Activated naive CD4-positive, alpha-beta T cell treated with anti-CD3 and anti-CD28 coated beads for 36 hours (primary cell): ENCODE measurements at regions of chr10 and their contacts with region 1.

Region 1: GRCh38 chr10:91251430-91252056 is 31.1 kb downstream of the PCGF5 start:
- DNase-seq: peak; percentile 70
- H3K4me3 Mint-ChIP-seq: no peak overlapping the region
- H3K27ac Mint-ChIP-seq: no peak overlapping the region
- H3K4me1 Mint-ChIP-seq: peaks cover 3% of the 10 kb centered on the region
- H3K27me3 Mint-ChIP-seq: no peaks in the 10 kb centered on the region

Region 2: GRCh38 chr10:90885176-90885575 is 366.4 kb before region 1 on chr10:
- CTCF ChIA-PET with region 1: interaction called, 3 read pairs
- intact Hi-C with region 1: loop called (anchors 1 kb)
- DNase-seq: no peak
- H3K4me3 Mint-ChIP-seq: no peak overlapping the region
- H3K27ac Mint-ChIP-seq: no peak overlapping the region
- H3K4me1 Mint-ChIP-seq: peaks cover 2% of the 10 kb centered on the region
- H3K27me3 Mint-ChIP-seq: no peaks in the 10 kb centered on the region

Region 3: DNA sequence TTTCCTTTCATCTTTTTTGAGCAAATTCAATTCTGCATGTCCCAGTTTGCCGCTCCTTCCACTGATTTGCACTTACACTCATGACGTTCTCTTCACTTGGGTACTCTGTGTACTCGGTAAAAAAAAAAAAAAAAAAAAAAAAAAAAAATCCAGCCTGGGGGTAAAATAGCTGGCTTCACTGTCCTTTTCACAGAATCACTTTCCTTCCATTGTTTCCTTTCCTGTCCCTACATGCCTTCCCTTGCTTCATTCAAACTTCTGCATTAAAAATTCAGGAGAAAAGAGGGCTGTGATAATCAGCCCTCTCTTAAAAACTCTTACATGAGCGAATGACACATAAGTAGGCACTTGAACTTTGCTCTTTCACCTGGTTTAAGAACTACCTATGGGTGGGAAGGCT is 339.4 kb before region 1 on chr10:
- CTCF ChIA-PET with region 1: interaction called, 36 read pairs
- intact Hi-C with region 1: loop called (anchors 1 kb)
- DNase-seq: no peak
- H3K4me3 Mint-ChIP-seq: no peak overlapping the region
- H3K27ac Mint-ChIP-seq: no peak overlapping the region
- H3K4me1 Mint-ChIP-seq: peaks cover 2% of the 10 kb centered on the region
- H3K27me3 Mint-ChIP-seq: no peaks in the 10 kb centered on the region

Region 4: DNA sequence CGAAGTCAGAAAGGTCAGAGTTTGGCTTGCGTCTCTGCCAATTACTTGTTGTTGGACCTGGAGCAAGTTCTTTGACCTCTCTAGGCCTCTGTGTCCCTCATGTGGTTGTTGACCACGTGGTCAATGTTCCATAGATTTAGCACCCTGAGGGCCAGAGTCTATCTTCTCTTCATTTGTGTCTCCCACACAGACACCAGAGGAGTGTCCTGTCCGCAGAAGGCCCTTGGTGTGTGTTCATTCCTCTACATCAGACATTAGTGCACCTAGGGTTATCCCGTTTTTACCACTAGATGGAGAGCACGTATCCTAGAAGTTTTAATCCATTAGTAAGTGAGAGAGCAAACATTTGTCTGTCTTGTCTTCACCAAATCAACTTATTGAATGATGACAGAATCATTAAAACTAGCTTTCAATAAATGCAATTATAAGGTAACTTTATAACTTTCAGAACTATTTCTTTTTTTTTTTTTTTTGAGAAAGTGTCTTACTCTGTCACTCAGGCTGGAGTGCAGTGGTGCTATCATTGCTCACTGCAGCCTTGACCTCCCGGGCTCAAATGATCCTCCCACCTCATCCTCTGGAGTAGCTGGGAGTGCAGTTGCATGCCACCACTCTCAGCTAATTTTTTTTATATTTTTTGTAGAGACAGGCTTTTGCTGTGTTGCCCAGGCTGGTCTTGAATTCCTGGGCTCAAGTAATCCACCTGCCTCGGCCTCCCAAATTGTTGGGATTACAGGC is 208.2 kb before region 1 on chr10:
- CTCF ChIA-PET with region 1: interaction called, 7 read pairs
- intact Hi-C with region 1: loop called (anchors 1 kb)
- DNase-seq: no peak
- H3K4me3 Mint-ChIP-seq: no peak overlapping the region
- H3K27ac Mint-ChIP-seq: no peak overlapping the region
- H3K4me1 Mint-ChIP-seq: no peaks in the 10 kb centered on the region
- H3K27me3 Mint-ChIP-seq: peaks cover 4% of the 10 kb centered on the region

Region 5: GRCh38 chr10:91088300-91089140 is 163.0 kb before region 1 on chr10:
- CTCF ChIA-PET with region 1: interaction called, 80 read pairs
- intact Hi-C with region 1: loop called (anchors 1 kb)
- DNase-seq: no peak
- H3K4me3 Mint-ChIP-seq: no peak overlapping the region
- H3K27ac Mint-ChIP-seq: no peak overlapping the region
- H3K4me1 Mint-ChIP-seq: no peaks in the 10 kb centered on the region
- H3K27me3 Mint-ChIP-seq: no peaks in the 10 kb centered on the region

Region 6: DNA sequence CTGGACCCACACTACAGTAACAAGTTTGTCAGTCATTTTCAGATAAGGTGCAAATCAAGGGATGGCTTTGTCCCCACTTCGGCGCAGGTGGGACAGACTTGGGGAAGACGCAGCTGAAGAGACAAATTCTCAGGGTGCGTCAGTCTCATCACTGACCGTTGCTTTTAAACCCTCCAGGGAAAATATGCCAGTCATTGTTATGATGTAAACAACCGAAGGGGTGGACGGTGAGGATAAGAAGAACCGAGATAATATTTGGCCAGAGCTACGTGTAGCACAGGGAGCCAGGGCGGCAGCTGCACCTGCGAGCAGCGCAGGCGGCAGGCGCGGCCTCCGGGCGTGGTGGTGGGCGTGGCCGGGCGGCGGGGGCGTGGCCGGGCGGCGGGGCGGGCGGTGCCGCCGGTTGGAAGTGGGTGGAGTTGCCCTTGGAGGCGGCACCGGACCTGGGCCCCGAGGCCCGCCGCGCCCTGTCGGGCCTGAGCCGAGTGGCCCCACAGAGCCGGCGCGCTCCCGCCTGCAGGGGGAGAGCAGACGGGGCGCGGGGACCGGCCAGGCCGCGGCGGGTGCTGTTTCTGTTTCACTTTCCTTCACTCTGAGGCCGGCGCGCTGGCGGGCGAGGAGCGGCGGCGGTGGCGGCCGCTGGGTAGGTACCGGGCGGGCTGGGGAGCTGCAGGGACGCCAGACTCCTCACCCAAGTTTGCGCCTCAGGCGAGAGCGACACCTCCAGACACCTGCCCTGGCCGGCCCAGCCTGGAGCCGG is 31.2 kb before region 1 on chr10 and contains the start of gene PCGF5:
- CTCF ChIA-PET with region 1: interaction called, 9 read pairs
- intact Hi-C with region 1: loop called (anchors 2 kb)
- DNase-seq: peak; percentile 89
- H3K4me3 Mint-ChIP-seq: peak within 1 kb of the TSS; percentile 80
- H3K27ac Mint-ChIP-seq: peak within 1 kb of the TSS; percentile 22
- H3K4me1 Mint-ChIP-seq: peaks cover 33% of the 10 kb centered on the region
- H3K27me3 Mint-ChIP-seq: no peaks in the 10 kb centered on the region
- total RNA-seq, gene PCGF5: 34.2 to 36.4 TPM